ENCODE measurements at regions of chr1 and their contacts with region 1.

Region 1: GRCh38 chr1:26541816-26542711 is 12.5 kb downstream of the RPS6KA1 start:
- DNase-seq: peak; percentile 91
- H3K4me3 Mint-ChIP-seq: peak overlapping the region; percentile 73
- H3K27ac Mint-ChIP-seq: peak overlapping the region; percentile 95
- H3K4me1 Mint-ChIP-seq: peaks cover 81% of the 10 kb centered on the region
- H3K27me3 Mint-ChIP-seq: no peaks in the 10 kb centered on the region

Region 2: GRCh38 chr1:26237230-26237966 is 304.7 kb before region 1 on chr1:
- CTCF ChIA-PET with region 1: no interaction called
- intact Hi-C with region 1: no loop called
- DNase-seq: no peak
- H3K4me3 Mint-ChIP-seq: no peak overlapping the region
- H3K27ac Mint-ChIP-seq: no peak overlapping the region
- H3K4me1 Mint-ChIP-seq: peaks cover 36% of the 10 kb centered on the region
- H3K27me3 Mint-ChIP-seq: no peaks in the 10 kb centered on the region

Region 3: DNA sequence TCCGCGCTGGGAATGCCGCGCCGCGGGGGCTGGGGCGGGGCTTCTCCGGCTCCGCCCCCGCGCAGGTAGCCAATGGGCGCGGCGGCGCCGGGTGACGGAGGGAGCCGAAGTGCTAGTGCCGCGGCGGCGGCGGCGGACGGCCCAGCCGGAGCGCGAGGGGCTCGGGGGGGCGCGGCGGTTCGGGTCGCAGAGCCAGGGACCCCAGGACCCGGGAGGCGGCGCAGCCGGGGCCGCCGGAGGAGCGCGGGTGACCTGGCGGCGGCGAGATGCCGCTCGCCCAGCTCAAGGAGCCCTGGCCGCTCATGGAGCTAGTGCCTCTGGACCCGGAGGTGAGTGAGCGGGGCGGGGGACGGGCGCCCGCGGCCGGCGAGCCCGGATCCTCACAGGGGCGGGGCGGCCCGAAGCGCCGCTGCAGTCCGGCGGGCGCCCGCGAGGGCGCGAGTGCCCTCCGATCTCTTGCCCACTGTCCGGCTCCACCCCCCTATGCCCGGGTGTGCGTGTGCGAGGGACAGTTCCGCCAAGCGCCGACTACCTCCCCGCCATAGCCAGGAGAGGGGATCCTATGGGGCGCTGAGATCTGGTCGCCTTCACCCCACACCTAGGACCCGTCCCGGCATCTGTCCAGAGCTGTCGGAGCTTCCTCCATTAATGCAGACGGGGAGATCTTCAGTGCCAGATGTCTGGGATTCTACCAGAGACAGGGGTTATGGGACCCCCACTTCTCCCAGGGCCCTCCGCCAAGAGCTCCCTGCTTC is 12.2 kb before region 1 on chr1 and contains the start of gene RPS6KA1:
- CTCF ChIA-PET with region 1: interaction called, 87 read pairs
- intact Hi-C with region 1: no loop called
- DNase-seq: peak; percentile 47
- H3K4me3 Mint-ChIP-seq: peak within 1 kb of the TSS; percentile 85
- H3K27ac Mint-ChIP-seq: peak within 1 kb of the TSS; percentile 44
- H3K4me1 Mint-ChIP-seq: peaks cover 28% of the 10 kb centered on the region
- H3K27me3 Mint-ChIP-seq: no peaks in the 10 kb centered on the region
- total RNA-seq, gene RPS6KA1: 83.5 to 86.4 TPM

Region 4: GRCh38 chr1:26582836-26583460 is 40.9 kb after region 1 on chr1:
- CTCF ChIA-PET with region 1: interaction called, 10 read pairs
- intact Hi-C with region 1: loop called (anchors 1 kb)
- DNase-seq: peak; percentile 90
- H3K4me3 Mint-ChIP-seq: no peak overlapping the region
- H3K27ac Mint-ChIP-seq: peak overlapping the region; percentile 72
- H3K4me1 Mint-ChIP-seq: peaks cover 51% of the 10 kb centered on the region
- H3K27me3 Mint-ChIP-seq: no peaks in the 10 kb centered on the region

Region 5: GRCh38 chr1:26695356-26696118 is 153.5 kb after region 1 on chr1 and contains the start of gene ARID1A:
- CTCF ChIA-PET with region 1: no interaction called
- intact Hi-C with region 1: loop called (anchors 5 kb)
- DNase-seq: peak; percentile 95
- H3K4me3 Mint-ChIP-seq: peak within 1 kb of the TSS; percentile 81
- H3K27ac Mint-ChIP-seq: peak within 1 kb of the TSS; percentile 91
- H3K4me1 Mint-ChIP-seq: peaks cover 22% of the 10 kb centered on the region
- H3K27me3 Mint-ChIP-seq: no peaks in the 10 kb centered on the region
- total RNA-seq, gene ARID1A: 65.0 to 65.9 TPM

Region 6: DNA sequence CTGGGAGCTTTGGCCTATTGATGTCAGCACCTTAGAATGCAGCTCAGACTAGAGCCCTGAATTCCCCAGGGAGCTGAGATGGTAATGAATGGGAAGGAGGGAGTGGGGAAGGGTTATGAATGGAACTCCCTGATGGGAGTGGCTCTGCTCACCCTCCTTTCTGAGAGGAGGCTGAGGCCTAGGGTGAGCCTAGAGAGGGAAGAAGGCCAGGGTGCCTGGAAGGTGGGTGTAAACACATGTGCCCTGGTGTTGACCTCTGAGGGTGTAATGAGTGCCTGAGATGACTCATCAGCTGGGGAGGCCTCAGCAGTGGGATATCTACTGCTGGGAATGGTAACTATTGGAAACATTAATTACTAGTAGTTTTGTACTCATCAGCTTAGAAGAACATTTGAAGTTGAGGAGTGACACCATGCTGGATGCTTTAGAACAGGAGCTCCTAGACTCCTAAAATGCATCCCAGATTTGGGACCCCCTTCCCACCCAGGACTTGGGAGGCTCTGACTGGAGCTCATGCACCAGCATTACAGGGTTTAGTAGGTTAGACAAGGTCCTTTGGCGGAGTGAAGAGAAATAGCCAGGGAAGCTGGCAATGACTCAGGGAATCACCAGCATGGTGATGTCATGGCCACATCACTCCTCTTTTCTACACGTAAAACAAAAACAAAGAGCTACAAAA is 229.7 kb after region 1 on chr1:
- CTCF ChIA-PET with region 1: no interaction called
- intact Hi-C with region 1: no loop called
- DNase-seq: peak; percentile 58
- H3K4me3 Mint-ChIP-seq: no peak overlapping the region
- H3K27ac Mint-ChIP-seq: peak overlapping the region; percentile 90
- H3K4me1 Mint-ChIP-seq: peaks cover 22% of the 10 kb centered on the region
- H3K27me3 Mint-ChIP-seq: no peaks in the 10 kb centered on the region

Region 7: DNA sequence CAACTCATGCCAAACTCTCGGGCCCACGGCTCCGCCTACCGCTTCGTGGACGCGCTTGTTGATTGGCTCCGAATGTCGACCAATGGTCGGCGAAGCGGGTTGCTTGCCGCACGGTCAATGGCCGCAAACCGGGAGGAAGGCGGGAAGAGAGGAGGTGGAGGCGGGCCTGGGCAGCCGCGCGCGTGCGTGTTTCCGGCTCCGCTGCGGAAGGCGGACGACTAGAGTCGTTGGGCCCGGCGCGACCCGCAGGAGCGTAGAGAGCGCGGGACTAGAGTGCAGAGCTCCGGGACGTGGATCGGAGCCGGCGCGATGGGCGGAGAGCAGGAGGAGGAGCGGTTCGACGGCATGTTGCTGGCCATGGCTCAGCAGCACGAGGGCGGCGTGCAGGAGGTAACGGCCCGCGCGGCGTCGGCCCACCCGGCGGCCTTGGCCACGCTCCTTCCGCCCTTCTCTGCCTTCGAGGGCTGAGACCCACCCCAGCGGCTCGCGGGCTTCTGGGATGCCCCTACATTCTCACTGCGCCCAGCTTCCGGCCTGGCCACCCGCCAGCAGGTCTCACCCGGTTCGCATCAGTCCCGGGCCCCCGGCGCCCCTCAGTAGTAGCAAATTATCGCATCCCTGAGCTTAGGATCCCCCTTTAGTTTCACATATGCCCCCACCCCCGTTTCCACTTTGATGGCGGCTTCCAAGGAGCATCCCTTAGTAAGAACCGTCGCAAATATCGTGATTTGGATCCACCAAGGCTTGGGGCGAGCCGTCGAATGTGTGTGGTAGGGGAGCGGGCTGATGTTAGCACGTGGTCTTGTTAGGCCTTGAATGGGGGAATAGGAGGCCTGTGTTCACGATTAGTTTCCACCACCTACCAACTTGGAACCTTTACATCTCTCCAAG is 379.7 kb after region 1 on chr1 and contains the start of gene NUDC:
- CTCF ChIA-PET with region 1: no interaction called
- intact Hi-C with region 1: no loop called
- DNase-seq: peak; percentile 98
- H3K4me3 Mint-ChIP-seq: peak within 1 kb of the TSS; percentile 99
- H3K27ac Mint-ChIP-seq: peak within 1 kb of the TSS; percentile 93
- H3K4me1 Mint-ChIP-seq: peaks cover 37% of the 10 kb centered on the region
- H3K27me3 Mint-ChIP-seq: no peaks in the 10 kb centered on the region
- total RNA-seq, gene NUDC: 75.3 to 78.1 TPM

Region 8: DNA sequence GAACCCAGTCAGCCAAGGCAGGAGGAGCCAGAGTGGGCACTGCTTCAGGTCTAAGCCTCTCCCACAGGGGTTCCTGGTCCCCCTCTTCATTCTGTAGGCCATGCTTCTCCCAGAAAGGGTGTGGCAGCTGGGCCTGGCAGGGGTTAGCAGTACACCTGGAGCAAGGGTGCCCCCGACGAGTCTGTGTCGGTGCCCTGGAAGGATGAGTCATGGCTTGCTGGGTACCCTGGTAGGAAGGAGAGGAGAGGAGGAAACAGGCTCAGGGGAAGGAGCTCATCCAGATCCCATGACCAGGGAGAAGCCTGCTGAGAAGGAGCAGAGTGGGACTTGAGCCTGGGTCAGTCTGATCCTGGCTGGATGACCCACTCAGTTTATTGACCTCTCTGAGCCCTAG is 407.9 kb after region 1 on chr1:
- CTCF ChIA-PET with region 1: no interaction called
- intact Hi-C with region 1: no loop called
- DNase-seq: no peak
- H3K4me3 Mint-ChIP-seq: no peak overlapping the region
- H3K27ac Mint-ChIP-seq: no peak overlapping the region
- H3K4me1 Mint-ChIP-seq: no peaks in the 10 kb centered on the region
- H3K27me3 Mint-ChIP-seq: no peaks in the 10 kb centered on the region

Measured in activated naive CD4-positive, alpha-beta T cell treated with anti-CD3 and anti-CD28 coated beads for 36 hours (primary cell).